Right ventricle myocardium inferior (tissue), 1 donor: ENCODE measurements at regions of chr1 and their contacts with region 1.

Region 1: GRCh38 chr1:201703621-201704439 is 125.1 kb upstream of the IPO9 start:
- DNase-seq: peak; percentile 92
- ATAC-seq: peak; percentile 87

Region 2: DNA sequence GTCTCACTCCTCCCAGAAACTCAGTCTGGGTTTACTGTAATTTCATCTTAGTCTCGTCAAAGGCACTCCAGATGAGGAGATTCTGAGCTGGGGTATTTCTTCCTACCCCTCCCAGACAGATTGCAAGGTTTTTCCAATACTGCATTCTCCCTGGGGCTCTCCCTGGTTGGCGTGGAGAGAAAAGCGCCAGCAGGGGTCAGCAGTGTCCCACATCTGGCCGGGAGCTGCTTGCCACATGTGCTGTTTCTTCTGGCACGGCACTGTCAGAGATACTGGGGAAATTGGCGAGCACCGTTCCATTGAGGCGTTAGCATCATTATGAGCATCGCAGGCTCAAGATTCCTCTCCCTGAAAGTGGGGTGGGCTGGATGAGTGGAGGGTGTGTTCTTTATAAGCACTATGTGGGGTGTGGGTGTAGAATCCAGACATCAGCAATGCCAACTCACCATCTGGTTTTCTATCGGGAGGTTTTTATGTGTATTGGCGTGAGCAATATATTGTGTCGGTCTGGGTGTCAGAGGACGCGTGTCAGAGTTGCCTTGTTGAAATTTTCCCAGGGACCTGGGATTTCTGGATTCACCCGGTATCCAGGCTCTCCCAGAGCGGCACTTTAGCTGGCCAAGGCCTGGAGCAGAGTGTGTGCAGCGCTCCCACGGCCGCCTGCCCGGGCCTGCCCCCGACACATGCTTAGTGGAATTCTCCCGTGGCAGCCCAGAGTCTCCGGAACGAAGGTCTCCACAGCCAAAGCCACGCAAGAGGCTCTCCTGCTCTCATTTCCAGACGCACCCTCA is 172.9 kb before region 1 on chr1:
- intact Hi-C with region 1: loop called (anchors 1 kb)
- DNase-seq: peak; percentile 89
- ATAC-seq: peak; percentile 88

Region 3: DNA sequence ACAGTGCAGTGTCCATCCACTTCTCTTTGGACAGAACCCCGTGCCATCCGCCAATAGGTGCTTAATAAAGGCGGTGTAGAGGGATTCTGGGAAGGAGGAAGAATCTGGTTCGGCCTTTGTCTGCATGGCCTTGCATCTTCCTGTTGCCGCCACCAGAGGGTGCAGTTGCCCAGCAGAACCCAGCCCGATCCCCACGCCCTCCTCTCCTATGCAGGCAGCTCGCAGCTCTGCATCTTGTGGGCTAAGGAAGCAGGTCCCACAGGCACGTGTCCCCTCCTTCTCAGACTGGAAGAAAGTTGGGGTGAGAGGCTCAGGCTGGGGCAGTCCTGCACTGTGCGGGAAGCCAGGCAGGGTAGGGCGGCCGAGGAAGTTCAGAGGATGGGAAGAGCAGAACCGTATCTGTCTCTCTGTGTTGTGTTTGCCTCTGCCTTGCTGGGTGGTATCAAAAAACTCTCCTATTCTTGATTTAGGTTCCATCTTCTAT is 144.1 kb before region 1 on chr1:
- intact Hi-C with region 1: loop called (anchors 1 kb)
- DNase-seq: peak; percentile 91
- ATAC-seq: peak; percentile 84

Region 4: GRCh38 chr1:202221911-202222909 is 518.4 kb after region 1 on chr1:
- intact Hi-C with region 1: no loop called
- DNase-seq: no peak
- ATAC-seq: no peak